IMR-90 (cell line): ENCODE measurements at regions of chr11 and their contacts with region 1.

Region 1: DNA sequence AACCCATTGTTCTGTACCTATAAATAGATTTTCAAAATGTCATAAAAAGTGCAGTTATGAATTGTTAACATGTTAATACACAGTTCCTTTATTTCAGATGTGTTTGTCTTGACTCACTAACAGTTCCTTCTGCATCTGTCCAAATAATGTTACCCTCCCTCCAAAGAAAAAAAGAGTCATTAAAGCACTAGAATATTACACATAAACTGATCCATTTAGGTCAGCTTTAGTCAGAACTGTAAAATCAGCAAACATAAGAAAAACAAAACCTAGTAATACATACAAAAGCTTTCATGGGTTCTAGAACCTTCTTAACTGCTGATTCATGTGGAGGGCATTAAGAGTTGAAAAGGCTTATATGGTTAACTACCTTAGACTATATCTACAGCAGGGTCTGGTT is 65.4 kb downstream of the SESN3 start:
- DNase-seq: no peak
- ATAC-seq: no peak
- H3K4me3 ChIP-seq: no peak overlapping the region
- H3K27ac ChIP-seq: no peak overlapping the region
- H3K4me1 ChIP-seq: no peaks in the 10 kb centered on the region
- H3K27me3 ChIP-seq: no peaks in the 10 kb centered on the region
- CTCF ChIP-seq: no peak
- POLR2A ChIP-seq: no peak
- RAD21 ChIP-seq: no peak

Region 2: DNA sequence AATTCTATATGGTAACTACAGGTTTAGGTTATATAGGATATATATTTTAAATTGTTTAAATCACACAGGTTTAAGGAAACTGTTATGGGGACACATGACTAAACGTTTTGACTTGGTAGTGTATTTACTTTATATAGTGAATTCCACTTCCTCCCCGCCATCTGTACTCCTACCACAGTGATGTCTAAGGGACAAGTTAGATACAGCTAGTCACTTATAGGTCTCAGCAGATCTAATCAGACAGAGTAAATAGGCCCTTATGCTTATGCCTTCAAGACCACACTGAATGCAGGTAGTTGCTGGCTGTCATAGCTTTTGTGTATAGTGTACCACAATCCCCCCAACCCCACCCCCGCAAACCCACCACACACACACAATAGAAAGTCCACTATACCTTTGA is 57.2 kb after region 1 on chr11:
- CTCF ChIA-PET with region 1: no interaction called
- POLR2A ChIA-PET with region 1: no interaction called
- dilution Hi-C with region 1: no loop called
- in situ Hi-C with region 1: no loop called
- intact Hi-C with region 1: loop called (anchors 2 kb)
- DNase-seq: no peak
- ATAC-seq: no peak
- H3K4me3 ChIP-seq: no peak overlapping the region
- H3K27ac ChIP-seq: no peak overlapping the region
- H3K4me1 ChIP-seq: no peaks in the 10 kb centered on the region
- H3K27me3 ChIP-seq: no peaks in the 10 kb centered on the region
- CTCF ChIP-seq: no peak
- POLR2A ChIP-seq: no peak
- RAD21 ChIP-seq: no peak